ENCODE measurements at regions of chr4 and their contacts with region 1.

Region 1: GRCh38 chr4:173420324-173420752 is 21.4 kb upstream of the SCRG1 start:
- DNase-seq: no peak
- H3K4me3 ChIP-seq: no peak overlapping the region
- H3K27ac ChIP-seq: no peak overlapping the region
- H3K4me1 ChIP-seq: peaks cover 4 to 25% (median 17%) of the 10 kb centered on the region in 4 donors
- H3K27me3 ChIP-seq: no peaks in the 10 kb centered on the region
- CTCF ChIP-seq: peak; percentile 54 to 59 (median 55)
- EP300 ChIP-seq: no peak
- POLR2A ChIP-seq: no peak

Region 2: GRCh38 chr4:173013232-173013930 is 407.0 kb before region 1 on chr4:
- intact Hi-C with region 1: loop called (anchors 10 kb)
- DNase-seq: no peak
- H3K4me3 ChIP-seq: no peak overlapping the region
- H3K27ac ChIP-seq: no peak overlapping the region
- H3K4me1 ChIP-seq: peaks cover 0 to 8% (median 0%) of the 10 kb centered on the region in 4 donors
- H3K27me3 ChIP-seq: no peaks in the 10 kb centered on the region
- CTCF ChIP-seq: peak; percentile 60 to 89 (median 86)
- EP300 ChIP-seq: no peak
- POLR2A ChIP-seq: no peak

Region 3: GRCh38 chr4:173318648-173319211 is 101.6 kb before region 1 on chr4:
- intact Hi-C with region 1: loop called (anchors 2 kb)
- DNase-seq: no peak
- H3K4me3 ChIP-seq: no peak overlapping the region
- H3K27ac ChIP-seq: no peak overlapping the region
- H3K4me1 ChIP-seq: peaks cover 0 to 7% (median 4%) of the 10 kb centered on the region in 4 donors
- H3K27me3 ChIP-seq: no peaks in the 10 kb centered on the region
- CTCF ChIP-seq: peak; percentile 16 to 48 (median 48)
- EP300 ChIP-seq: no peak
- POLR2A ChIP-seq: no peak

Region 4: DNA sequence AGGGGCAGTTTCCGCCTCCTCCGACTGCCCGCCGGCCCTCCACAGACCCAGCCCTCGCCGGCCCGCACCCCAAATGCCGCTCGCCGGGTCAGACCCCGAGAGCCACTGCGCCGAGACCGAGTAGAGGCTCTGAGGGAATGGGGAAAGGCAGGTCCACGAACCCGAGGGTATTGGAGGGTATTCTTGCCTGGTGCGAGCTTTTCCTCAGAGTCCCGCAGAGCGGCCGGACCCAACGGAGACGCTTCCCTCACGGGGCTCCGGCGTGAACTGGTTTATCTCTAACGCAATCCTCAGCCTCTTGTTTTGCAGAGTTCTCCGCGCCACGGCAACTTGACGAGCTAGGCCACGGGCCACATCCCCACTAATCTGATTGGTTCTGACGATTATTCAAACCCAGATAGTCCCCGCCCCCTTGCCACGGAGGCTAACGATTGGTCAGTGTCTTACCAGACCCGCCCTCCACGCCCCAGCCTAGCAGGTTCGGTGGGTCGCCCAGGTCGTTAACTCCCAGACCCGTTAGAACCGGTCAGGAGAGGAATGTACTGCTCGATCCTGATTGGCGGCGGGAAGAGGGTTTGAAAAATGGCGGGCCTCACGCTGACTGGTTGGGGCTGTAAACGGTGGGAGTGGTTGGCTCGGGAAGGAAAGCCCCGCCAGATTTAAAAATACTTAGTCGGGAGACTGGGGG is 86.1 kb before region 1 on chr4 and contains the start of gene HMGB2:
- intact Hi-C with region 1: loop called (anchors 5 kb)
- DNase-seq: peak; percentile 100
- H3K4me3 ChIP-seq: peak within 1 kb of the TSS; percentile 86 to 95 (median 94)
- H3K27ac ChIP-seq: peak within 1 kb of the TSS; percentile 98 to 100 (median 99)
- H3K4me1 ChIP-seq: peaks cover 14 to 36% (median 36%) of the 10 kb centered on the region in 4 donors
- H3K27me3 ChIP-seq: no peaks in the 10 kb centered on the region
- CTCF ChIP-seq: no peak
- EP300 ChIP-seq: no peak
- POLR2A ChIP-seq: peak; percentile 95
- total RNA-seq, gene HMGB2: 35.7 to 69.7 (median 46.2) TPM

Region 5: GRCh38 chr4:173494013-173494970 is 74.0 kb after region 1 on chr4:
- intact Hi-C with region 1: loop called (anchors 2 kb)
- DNase-seq: peak; percentile 93
- H3K4me3 ChIP-seq: peak overlapping the region; percentile 46 to 56 (median 53)
- H3K27ac ChIP-seq: peak overlapping the region in 2 of 4 donors; percentile 16 to 33
- H3K4me1 ChIP-seq: peaks cover 12 to 38% (median 35%) of the 10 kb centered on the region in 4 donors
- H3K27me3 ChIP-seq: no peaks in the 10 kb centered on the region
- CTCF ChIP-seq: peak; percentile 74 to 86 (median 80)
- EP300 ChIP-seq: no peak
- POLR2A ChIP-seq: no peak

Region 6: GRCh38 chr4:174156239-174156826 is 736.0 kb after region 1 on chr4:
- intact Hi-C with region 1: loop called (anchors 5 kb)
- DNase-seq: no peak
- H3K4me3 ChIP-seq: peak overlapping the region in 2 of 4 donors; percentile 3
- H3K27ac ChIP-seq: peak overlapping the region in 2 of 4 donors; percentile 48 to 60
- H3K4me1 ChIP-seq: peaks cover 12 to 39% (median 36%) of the 10 kb centered on the region in 4 donors
- H3K27me3 ChIP-seq: no peaks in the 10 kb centered on the region
- CTCF ChIP-seq: peak; percentile 55 to 73 (median 73)
- EP300 ChIP-seq: no peak
- POLR2A ChIP-seq: no peak